GM10248 (cell line): ENCODE measurements at regions of chr20 and their contacts with region 1.

Region 1: DNA sequence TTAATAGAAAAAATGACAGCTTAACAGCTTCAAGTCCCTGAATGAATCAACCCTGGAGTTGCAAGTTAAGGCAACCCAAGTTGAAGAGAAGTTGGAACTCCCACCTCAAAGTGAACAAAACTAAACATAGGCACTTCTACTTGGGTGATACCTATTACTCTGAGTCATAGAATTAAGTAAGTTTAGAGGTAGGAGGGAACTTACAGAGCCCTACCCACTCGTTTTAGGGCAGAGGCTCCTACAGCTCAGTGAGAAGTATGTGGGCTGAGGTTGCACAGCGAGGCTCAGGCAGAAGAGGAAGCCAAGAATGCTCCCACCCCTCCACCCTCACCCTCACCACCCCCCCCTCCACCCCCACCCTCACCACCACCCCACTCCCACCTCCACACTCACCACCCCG is 42.2 kb downstream of the NFATC2 start:
- DNase-seq: peak; percentile 82
- CTCF ChIP-seq: no peak

Region 2: GRCh38 chr20:51512645-51513044 is 12.3 kb after region 1 on chr20:
- CTCF ChIA-PET with region 1: interaction called, 10 read pairs
- POLR2A ChIA-PET with region 1: no interaction called
- DNase-seq: no peak
- CTCF ChIP-seq: no peak